AG04450 (cell line): ENCODE measurements at regions of chr3 and their contacts with region 1.

Region 1: DNA sequence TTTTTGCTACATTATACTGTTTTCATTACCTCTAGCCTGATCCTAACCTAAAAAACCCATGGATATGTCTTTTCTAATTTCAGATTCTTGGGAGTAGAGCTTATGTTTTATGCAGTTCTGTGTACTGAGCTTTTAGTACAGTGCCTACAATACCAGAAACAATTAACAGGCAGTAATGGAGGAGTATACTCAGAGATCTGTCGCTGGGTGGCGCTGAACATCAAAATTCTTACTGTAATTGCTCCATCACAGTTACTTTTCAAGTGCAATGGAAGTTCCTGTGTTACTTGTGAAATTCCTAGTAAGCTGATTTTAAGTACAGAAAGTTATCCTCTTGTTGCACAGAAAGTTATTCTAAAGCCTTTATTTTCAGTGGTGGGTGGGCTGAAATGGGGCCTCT is 66.9 kb downstream of the RNF13 start:
- DNase-seq: peak; percentile 16
- H3K4me3 ChIP-seq: no peak overlapping the region
- H3K27ac ChIP-seq: no peak overlapping the region
- H3K27me3 ChIP-seq: no peaks in the 10 kb centered on the region
- CTCF ChIP-seq: peak; percentile 76

Region 2: GRCh38 chr3:149765762-149766334 is 114.0 kb before region 1 on chr3:
- CTCF ChIA-PET with region 1: interaction called, 11 read pairs
- POLR2A ChIA-PET with region 1: no interaction called
- DNase-seq: no peak
- H3K4me3 ChIP-seq: no peak overlapping the region
- H3K27ac ChIP-seq: no peak overlapping the region
- H3K27me3 ChIP-seq: peaks cover 19% of the 10 kb centered on the region
- CTCF ChIP-seq: peak; percentile 68

Region 3: GRCh38 chr3:149860881-149861280 is 19.0 kb before region 1 on chr3:
- CTCF ChIA-PET with region 1: interaction called, 19 read pairs
- POLR2A ChIA-PET with region 1: no interaction called
- DNase-seq: no peak
- H3K4me3 ChIP-seq: no peak overlapping the region
- H3K27ac ChIP-seq: no peak overlapping the region
- H3K27me3 ChIP-seq: no peaks in the 10 kb centered on the region
- CTCF ChIP-seq: no peak

Region 4: GRCh38 chr3:149936812-149937233 is 57.0 kb after region 1 on chr3:
- CTCF ChIA-PET with region 1: interaction called, 17 read pairs
- POLR2A ChIA-PET with region 1: no interaction called
- DNase-seq: no peak
- H3K4me3 ChIP-seq: no peak overlapping the region
- H3K27ac ChIP-seq: no peak overlapping the region
- H3K27me3 ChIP-seq: no peaks in the 10 kb centered on the region
- CTCF ChIP-seq: peak; percentile 84

Region 5: DNA sequence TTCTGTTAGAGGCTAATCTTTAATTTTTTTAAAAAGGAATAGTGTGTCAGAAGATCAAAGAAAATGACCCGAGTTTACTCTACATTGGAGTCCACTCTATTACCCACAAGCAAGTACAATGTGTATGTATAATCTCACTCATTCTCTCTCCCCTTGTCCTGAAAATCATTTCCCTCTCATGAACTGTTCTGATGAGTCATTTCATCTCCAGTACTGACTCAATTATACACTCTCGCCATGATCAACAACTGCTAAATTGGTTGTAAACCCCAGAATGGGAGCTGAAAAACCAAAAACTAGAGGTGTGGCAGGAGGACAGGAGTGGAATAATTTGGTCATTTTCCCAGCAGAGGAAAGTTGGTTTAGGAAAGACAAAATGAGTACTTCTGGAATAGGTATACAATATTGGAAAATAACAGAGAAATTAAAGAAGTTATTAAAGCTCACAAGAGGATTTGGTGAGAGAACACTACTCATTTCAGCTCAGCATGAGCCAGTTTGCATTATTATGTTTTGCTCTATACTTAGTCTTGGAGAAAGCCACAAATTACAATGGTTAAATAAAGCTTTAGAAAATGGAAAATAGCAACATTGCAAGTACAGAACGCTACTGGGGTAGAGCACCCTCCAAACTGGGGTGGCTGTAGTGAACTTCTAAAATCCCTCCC is 235.1 kb after region 1 on chr3:
- CTCF ChIA-PET with region 1: no interaction called
- POLR2A ChIA-PET with region 1: no interaction called
- DNase-seq: no peak
- H3K4me3 ChIP-seq: no peak overlapping the region
- H3K27ac ChIP-seq: no peak overlapping the region
- H3K27me3 ChIP-seq: no peaks in the 10 kb centered on the region
- CTCF ChIP-seq: no peak

Region 6: GRCh38 chr3:150216041-150216811 is 336.4 kb after region 1 on chr3:
- CTCF ChIA-PET with region 1: interaction called, 24 read pairs
- POLR2A ChIA-PET with region 1: no interaction called
- DNase-seq: no peak
- H3K4me3 ChIP-seq: no peak overlapping the region; the same call in 1 of the 2 replicates
- H3K27ac ChIP-seq: peak overlapping the region; percentile 54
- H3K27me3 ChIP-seq: peaks cover 4% of the 10 kb centered on the region
- CTCF ChIP-seq: peak; percentile 19; the same call in 1 of the 2 replicates